ENCODE measurements at regions of chr1 and their contacts with region 1.

Region 1: DNA sequence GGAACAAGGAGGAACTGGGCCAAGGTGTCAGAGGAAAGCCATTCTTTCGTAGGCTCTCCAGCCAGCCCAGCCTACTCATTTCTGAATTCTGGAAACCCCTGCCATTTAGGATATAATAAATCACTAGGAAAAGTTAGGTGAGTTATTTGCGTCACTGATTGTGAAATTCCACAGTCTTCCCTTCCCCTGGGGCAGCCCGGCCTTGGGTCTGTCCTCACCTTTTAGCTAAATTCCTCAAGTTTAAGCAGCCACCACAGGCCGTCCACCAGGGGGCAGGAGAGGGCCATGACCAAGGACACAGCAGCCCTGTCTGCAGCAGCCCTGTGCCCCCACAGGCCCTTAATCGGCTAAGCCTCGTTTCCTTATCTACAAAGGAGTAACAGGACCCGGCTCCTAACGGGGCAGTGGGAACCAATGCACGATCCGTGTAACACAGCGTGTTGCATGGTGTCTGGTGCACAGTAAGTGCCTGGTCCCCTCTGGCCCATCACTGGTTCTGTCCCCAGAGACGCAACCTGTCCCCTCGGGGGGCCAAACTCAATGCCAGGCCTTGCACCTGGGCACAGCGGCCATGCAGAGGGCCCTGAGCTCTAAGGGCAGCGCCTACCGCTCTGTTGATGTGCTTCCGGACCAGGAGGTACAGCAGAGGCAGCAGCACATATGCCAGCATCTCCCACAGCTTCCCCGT is 18.1 kb downstream of the GPR157 start:
- DNase-seq: peak; percentile 77 to 93
- ATAC-seq: peak; percentile 94 to 97
- H3K4me3 ChIP-seq: no peak overlapping the region
- H3K27ac ChIP-seq: peak overlapping the region; percentile 58 to 88; a peak in 5 of 6 replicates
- H3K4me1 ChIP-seq: peaks cover 33% of the 10 kb centered on the region
- CTCF ChIP-seq: peak; percentile 77
- EP300 ChIP-seq: peak; percentile 12 to 63; a peak in 3 of 5 replicates
- POLR2A ChIP-seq: no peak
- RAD21 ChIP-seq: peak; percentile 90 to 92

Region 2: GRCh38 chr1:9121496-9122409 is 10.9 kb after region 1 on chr1:
- CTCF ChIA-PET with region 1: interaction called, 24 read pairs
- POLR2A ChIA-PET with region 1: no interaction called
- DNase-seq: no peak
- ATAC-seq: no peak
- H3K4me3 ChIP-seq: no peak overlapping the region
- H3K27ac ChIP-seq: no peak overlapping the region
- H3K4me1 ChIP-seq: peaks cover 3% of the 10 kb centered on the region; the same call in 1 of the 3 replicates
- CTCF ChIP-seq: no peak
- EP300 ChIP-seq: no peak
- POLR2A ChIP-seq: no peak
- RAD21 ChIP-seq: no peak

Region 3: DNA sequence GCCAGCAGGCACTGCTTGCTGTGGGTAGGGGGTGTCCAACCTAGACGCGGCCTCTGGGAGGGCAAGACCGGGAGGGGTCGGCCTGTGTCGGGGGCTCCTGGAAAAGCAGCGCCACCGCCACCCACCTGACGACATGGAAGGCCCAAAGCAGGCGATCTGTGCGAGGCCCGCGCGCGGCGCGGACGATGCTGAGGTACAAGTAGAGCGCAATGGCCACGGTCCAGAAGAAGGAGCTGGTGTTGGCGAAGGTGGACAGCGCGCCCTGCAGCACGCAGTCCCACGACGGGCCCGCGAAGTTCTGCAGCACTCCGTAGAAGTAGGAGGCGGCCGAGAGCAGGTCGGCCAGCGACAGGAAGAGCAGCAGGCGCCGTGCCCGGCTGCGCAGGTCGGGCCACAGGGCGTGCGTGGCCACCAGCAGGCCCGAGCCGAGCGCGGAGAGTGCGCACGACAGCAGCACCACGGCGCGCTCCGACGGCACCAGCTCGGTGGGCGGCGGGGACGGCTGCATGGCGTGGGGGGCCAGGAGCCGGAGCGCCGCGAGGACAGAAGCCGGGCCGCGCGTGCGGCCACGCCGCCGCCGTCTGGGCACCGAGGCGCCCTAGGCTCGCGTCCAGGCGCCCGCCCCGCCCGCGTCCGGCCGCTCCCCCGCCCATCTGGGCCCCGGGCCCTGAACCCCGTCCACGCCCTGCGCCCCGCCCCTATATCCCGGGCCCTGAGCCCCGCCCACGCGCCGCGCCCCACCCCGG is 17.9 kb after region 1 on chr1 and contains the start of gene GPR157:
- CTCF ChIA-PET with region 1: interaction called, 18 read pairs
- POLR2A ChIA-PET with region 1: interaction called, 3 read pairs
- DNase-seq: peak; percentile 85 to 86
- ATAC-seq: peak; percentile 80 to 86
- H3K4me3 ChIP-seq: peak within 1 kb of the TSS; percentile 69
- H3K27ac ChIP-seq: peak within 1 kb of the TSS; percentile 83 to 85
- H3K4me1 ChIP-seq: peaks cover 14% of the 10 kb centered on the region
- CTCF ChIP-seq: no peak
- EP300 ChIP-seq: no peak
- POLR2A ChIP-seq: peak; percentile 81
- RAD21 ChIP-seq: no peak
- polyA plus RNA-seq, gene GPR157: 3.6 and 3.7 TPM in 2 replicates

Region 4: GRCh38 chr1:9181176-9181906 is 70.5 kb after region 1 on chr1:
- CTCF ChIA-PET with region 1: interaction called, 11 read pairs
- POLR2A ChIA-PET with region 1: interaction called, 3 read pairs
- DNase-seq: peak; percentile 60 to 68
- ATAC-seq: peak; percentile 80 to 83
- H3K4me3 ChIP-seq: peak overlapping the region; percentile 68
- H3K27ac ChIP-seq: peak overlapping the region; percentile 93 to 100
- H3K4me1 ChIP-seq: peaks cover 42% of the 10 kb centered on the region
- CTCF ChIP-seq: peak; percentile 85
- EP300 ChIP-seq: no peak
- POLR2A ChIP-seq: no peak
- RAD21 ChIP-seq: peak; percentile 40 to 48; a peak in 4 of 5 replicates

Region 5: DNA sequence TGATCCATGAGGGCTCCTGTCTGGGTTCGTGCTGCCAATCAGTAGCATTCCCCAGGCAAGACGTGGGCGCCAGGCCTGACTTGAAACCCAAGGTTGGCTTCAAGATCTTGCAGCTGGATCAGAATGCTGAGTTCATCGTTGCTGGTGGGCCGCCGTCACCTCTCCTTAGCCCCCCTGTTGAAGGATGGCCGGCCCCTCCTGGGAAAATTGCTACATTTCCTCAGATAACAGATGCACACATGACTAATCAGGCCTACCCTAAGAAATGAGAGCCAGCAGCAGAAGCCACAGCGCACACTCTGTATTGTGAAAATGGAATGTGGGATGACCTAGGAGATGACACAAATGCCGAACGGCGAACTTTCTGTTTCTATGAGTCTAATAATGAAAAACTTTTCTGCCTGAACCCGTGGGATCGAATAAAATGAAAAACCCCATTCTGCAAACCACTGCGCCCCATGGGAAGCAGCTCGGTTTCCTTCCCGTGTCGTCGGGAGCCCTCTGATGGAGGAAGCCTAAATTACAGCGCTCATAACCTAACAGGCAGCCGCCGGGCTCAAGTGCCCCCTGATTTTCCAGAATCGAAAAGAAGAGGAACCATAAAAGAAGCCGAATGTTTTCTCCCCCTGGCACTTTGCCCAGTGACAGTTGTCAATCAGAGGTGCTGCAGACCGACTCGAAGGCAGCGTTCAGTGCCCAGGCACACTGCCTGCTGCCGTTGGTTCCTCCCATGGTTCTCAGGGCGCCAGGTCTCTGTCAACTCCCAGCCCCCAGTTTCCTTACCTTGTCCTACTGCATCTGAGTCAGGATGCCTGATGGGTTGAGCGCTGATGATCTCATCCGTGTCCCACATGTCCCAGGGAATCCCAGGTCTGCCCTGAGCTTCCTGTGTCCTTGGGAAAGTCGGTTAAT is 85.6 kb after region 1 on chr1:
- CTCF ChIA-PET with region 1: interaction called, 19 read pairs
- POLR2A ChIA-PET with region 1: no interaction called
- DNase-seq: peak; percentile 29 to 48
- ATAC-seq: peak; percentile 72 to 84; a peak in 5 of 6 replicates
- H3K4me3 ChIP-seq: no peak overlapping the region
- H3K27ac ChIP-seq: peak overlapping the region; percentile 50 to 81; a peak in 5 of 6 replicates
- H3K4me1 ChIP-seq: peaks cover 29% of the 10 kb centered on the region
- CTCF ChIP-seq: peak; percentile 72
- EP300 ChIP-seq: no peak
- POLR2A ChIP-seq: no peak
- RAD21 ChIP-seq: peak; percentile 89 to 92

Region 6: DNA sequence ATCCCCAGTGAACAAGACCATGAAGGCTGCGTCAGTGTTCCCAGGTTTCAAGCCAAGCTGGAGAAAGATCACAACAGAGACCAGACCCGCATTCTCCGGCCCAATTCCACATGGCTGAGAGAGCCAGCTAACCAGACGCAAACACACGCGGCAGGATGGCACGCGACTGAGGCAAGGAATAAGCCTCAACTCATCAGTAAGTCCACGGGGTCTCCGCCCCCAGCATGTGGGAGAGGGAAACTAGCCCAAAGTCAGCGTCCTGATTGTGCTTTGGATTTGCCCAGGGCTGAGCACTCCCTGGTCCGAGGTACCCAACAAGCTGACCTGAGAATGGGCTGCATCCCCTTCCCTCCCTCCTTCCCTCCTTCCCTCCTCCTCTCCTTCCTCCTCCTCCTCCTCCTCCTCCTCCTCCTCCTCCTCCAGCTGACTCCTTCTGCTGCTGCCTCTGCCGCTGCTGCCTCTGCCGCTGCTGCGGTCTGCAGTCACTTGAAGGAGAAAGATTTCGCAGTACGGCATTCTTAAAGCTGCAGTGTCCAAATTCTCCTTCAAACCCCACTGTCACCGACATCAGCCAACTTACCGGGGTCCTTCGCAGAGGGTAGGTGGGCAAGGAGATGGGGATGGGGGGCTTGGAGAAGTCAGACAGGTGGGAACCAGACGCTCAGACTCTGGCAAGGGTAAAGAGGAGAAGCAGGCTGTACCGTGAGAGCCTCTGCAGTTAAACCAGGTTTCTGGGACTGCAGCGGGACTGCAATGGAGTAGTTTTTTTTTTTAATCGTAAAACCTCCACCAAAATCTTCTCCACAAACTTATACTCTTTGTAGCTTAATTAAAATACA is 90.8 kb after region 1 on chr1:
- CTCF ChIA-PET with region 1: interaction called, 19 read pairs
- POLR2A ChIA-PET with region 1: no interaction called
- DNase-seq: no peak
- ATAC-seq: peak in 1 of 2 experiments; percentile 62; a peak in 4 of 6 replicates
- H3K4me3 ChIP-seq: peak overlapping the region; percentile 39; the same call in 2 of the 3 replicates
- H3K27ac ChIP-seq: peak overlapping the region; percentile 36 to 73; a peak in 3 of 6 replicates
- H3K4me1 ChIP-seq: peaks cover 3% of the 10 kb centered on the region
- CTCF ChIP-seq: no peak
- EP300 ChIP-seq: no peak
- POLR2A ChIP-seq: no peak
- RAD21 ChIP-seq: no peak

Region 7: GRCh38 chr1:9234223-9235095 is 123.6 kb after region 1 on chr1 and contains the start of gene H6PD:
- CTCF ChIA-PET with region 1: interaction called, 10 read pairs
- POLR2A ChIA-PET with region 1: no interaction called
- DNase-seq: peak; percentile 78 to 90
- ATAC-seq: peak; percentile 91
- H3K4me3 ChIP-seq: peak within 1 kb of the TSS; percentile 93
- H3K27ac ChIP-seq: peak within 1 kb of the TSS; percentile 98 to 99
- H3K4me1 ChIP-seq: peaks cover 21% of the 10 kb centered on the region
- CTCF ChIP-seq: peak; percentile 50; the same call in 2 of the 3 replicates
- EP300 ChIP-seq: no peak
- POLR2A ChIP-seq: peak; percentile 77
- RAD21 ChIP-seq: no peak
- polyA plus RNA-seq, gene H6PD: 7.9 and 9.8 TPM in 2 replicates